ENCODE measurements at regions of chr1 and their contacts with region 1.

Region 1: DNA sequence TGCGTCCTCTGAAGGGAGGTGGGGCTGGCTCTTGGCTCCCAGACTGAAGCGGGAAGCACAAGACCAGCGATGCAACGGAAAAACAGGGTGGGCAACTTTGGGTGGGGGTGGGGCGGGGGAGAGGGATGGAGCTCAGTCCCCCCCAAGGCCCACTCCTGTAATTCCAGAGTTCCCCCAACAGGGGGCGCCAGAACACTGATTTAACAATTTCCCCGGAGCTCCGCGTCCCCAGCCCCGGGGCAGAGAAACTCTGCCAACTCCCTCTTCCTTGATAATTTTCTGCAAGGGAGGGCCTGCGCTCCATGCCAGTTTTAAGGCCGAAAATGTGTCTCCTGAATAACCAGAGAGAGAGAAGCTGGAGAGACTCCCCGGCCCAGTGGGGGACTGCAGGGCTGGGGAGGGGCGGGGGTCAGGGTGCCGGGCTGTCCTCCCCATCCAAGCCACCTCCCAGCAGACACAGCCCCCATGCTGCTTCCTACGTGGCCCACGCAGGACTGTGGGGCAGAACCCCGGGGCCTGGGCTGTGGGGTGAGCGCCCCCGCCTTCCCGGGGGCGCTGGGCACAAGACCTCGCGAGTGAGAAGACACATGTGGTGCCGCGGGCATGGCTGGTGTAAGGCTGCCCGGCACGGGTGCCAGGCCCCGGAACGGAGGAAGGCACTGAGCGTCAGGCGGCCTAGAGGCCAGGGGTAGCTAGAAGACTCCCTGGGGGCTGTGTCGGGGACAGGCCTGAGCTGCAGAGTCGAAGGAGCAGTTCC is 51.4 kb downstream of the KIF21B start:
- DNase-seq: no peak

Region 2: DNA sequence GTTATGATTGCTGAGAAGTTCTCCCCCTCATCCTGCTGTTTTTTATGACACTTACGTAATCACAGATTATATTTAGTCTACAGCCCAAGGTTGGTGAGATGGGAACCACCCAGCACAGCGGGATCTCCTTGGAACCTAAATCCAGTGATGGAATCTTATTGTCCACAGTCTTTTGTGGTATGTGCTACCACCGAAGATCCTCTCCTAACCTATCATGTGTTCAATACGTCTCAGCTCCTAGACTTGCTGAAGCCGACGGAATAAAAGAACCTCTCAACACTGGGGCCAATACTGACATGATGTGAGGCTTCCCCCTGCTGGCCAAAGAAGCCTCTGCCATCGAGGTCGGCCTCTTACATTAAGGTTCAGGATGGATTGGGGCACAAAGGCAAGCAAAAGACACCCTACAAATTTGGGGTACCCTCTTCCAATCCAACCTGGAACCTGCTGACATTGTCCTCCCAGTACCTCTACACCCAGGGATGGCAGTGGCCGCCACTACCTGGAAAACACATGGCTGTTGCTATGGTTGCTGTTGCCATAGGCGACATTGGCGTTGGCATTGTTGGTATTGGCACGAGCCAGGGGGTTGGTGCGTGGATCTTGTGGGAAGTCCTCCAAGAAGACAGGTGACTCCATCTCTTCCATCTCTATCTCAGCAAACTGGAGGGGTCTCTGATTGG is 70.8 kb after region 1 on chr1:
- intact Hi-C with region 1: loop called (anchors 2 kb)
- DNase-seq: no peak

Region 3: DNA sequence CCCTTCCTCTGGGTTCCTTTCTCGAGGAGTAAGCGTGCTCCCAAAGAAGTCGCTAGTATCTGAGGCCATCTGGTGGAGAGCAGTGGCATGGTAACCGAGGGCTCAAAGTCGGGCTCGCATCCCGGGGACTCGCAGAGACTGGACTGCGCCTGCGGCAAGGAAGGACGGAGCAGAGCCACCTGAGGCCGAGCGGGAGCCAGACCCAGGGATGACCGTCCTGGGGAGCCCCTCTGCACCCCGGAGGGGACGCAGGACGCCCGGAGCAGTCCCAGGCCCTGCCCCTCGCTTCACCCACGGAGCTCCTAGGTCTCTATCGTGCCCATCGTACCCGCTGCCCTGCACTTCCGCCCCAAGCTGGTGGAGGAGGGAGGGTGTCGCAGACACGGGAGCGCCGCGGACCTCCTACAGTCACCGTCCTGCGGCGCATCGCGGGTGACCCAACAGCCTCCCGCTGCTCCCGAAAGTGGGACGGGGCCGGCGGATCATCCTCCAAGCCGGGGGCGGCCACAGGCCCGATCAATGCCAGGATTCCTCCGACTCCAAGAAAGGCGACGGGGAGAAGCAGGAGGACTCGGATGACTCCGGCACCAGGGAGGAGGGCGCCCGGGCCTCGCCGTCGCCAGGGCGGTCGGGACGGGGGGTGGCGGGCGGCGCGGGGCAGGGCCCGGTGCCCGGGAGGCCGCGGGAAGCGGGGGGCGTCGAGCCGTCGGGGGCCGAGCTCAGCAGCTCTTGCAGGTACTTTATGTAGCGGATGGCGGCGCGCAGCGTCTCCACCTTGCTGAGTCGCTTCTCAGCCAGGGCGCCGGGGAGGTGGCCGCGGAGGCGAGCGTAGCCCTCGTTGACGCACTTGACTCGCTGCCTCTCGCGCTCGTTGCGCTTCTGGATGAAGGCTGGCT is 142.4 kb after region 1 on chr1:
- intact Hi-C with region 1: loop called (anchors 2 kb)
- DNase-seq: peak; percentile 88

Region 4: DNA sequence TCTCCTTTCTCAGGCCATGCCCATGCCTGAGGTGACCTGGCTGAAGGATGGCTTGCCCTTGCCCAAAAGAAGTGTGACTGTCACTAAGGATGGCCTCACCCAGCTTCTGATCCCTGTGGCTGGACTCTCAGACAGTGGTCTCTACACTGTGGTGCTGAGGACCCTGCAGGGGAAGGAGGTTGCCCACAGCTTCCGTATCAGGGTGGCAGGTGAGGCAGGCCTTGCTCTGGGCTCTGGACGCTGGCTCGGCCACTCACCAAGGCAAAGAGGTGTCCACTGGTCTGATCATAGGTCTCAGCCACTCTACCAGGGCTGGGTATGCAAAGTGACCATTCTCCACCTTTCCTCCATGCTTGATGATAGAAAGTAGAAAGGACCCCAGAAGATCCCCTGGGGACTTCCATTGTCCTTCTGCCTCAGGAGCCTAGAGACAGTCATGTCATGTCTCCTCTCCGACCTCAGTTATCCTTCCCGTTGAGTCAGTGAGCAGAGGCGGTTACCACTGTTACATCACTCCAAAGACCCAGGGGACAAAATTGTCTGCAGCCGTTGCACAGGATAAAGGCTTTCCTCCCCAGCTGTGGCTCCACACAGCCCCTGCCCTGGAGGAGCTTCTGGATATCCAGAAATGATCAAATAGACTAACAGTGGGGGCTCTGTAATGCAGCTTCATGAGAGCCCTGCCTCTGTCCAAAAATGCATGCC is 252.7 kb after region 1 on chr1:
- intact Hi-C with region 1: loop called (anchors 5 kb)
- DNase-seq: no peak